CD8-positive, alpha-beta T cell (primary cell): ENCODE measurements at regions of chr2 and their contacts with region 1.

Region 1: DNA sequence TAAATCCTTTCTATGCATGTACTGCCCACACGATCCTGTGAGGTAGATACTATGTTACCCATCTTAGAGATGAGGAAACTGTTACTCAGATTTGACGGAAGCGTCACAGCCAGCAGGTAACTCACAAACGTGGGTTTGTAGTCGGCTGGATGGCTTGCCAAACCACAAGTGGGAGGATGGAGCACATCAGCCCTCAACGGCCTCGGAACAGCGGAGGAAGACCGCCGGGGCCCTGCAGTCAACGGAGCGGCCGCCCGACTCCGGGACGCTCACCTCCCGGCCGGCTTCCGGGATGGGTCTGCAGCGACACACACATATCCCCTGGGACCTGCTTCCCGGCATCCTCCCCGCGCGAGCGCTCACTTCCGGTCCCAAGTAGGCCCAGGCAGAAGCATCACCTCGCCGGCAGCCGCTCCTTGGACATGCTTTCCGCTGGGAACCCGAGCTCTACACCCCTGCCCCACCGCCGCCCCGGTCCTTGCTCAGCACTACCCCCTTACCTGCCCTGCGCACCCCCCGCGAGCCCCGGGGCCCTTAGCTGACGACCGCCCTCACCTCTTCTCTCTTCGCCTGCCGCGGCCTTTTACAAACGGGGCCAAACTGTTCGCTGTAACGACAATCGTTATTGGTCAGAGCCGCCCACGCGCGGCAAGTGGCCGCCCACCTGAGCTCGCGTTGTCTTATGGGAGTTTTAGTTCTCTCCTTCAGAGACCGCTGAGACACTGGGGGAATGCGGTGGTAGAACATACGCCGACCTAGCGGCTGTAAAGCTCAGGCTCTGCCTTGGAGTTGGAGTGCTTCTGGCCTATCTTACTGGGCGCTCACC is at the start of gene C2orf42:
- DNase-seq: peak; percentile 88 to 98 (median 95)
- ATAC-seq: peak; percentile 83
- H3K4me3 ChIP-seq: peak within 1 kb of the TSS; percentile 82 to 95
- H3K4me3 Mint-ChIP-seq: peak within 1 kb of the TSS; percentile 100
- H3K27ac ChIP-seq: peak within 1 kb of the TSS; percentile 88 to 99
- H3K27ac Mint-ChIP-seq: peak within 1 kb of the TSS; percentile 100
- H3K4me1 ChIP-seq: peaks cover 5% of the 10 kb centered on the region
- H3K4me1 Mint-ChIP-seq: peaks cover 24% of the 10 kb centered on the region
- H3K27me3 ChIP-seq: no peaks in the 10 kb centered on the region
- H3K27me3 Mint-ChIP-seq: peaks cover 2% of the 10 kb centered on the region
- CTCF ChIP-seq: no peak
- total RNA-seq, gene C2orf42: 14.7 to 16.8 TPM

Region 2: DNA sequence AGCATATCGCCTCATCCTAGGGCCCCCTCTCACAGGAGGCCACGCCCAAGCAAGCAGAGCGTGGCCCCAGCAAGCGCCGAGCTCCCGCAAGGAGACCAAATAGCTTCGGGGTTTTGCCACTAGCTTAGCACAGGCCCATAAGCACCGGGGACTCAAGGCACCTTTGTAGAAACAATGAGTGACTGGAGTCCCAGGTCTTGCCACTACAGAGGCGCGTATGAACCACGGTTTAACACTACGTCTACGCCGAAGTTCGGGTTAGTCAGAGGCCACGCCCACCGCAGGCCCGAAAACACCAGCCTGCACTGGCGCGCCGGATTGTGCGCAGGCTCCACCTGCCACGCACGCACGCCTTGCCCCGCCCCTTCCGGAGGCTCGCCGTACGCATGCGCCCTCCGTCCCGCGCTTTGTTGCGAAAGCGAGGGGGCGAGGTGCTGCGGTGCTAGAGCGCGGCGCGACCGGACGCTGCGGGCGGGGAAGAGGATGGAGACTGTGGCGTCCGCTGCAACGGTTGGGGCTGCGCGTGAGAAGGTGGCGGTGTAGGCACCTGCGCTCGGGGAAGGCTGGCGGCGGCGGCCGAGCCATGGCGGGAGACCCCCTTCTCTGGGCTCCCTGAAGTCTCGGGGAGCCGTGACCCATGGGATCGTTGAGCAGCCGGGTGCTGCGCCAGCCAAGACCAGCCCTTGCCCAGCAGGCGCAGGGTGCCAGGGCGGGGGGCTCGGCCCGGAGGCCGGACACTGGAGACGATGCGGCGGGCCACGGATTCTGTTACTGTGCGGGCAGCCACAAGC is 361.2 kb before region 1 on chr2 and contains the start of gene GMCL1:
- CTCF ChIA-PET with region 1: no interaction called
- POLR2A ChIA-PET with region 1: interaction called, 5 read pairs
- intact Hi-C with region 1: loop called (anchors 1 to 2 kb)
- DNase-seq: peak; percentile 96 to 100 (median 99)
- ATAC-seq: peak; percentile 94
- H3K4me3 ChIP-seq: peak within 1 kb of the TSS; percentile 70 to 75
- H3K4me3 Mint-ChIP-seq: peak within 1 kb of the TSS; percentile 96
- H3K27ac ChIP-seq: peak within 1 kb of the TSS; percentile 89 to 95
- H3K27ac Mint-ChIP-seq: peak within 1 kb of the TSS; percentile 96
- H3K4me1 ChIP-seq: peaks cover 36% of the 10 kb centered on the region
- H3K4me1 Mint-ChIP-seq: peaks cover 54% of the 10 kb centered on the region
- H3K27me3 ChIP-seq: no peaks in the 10 kb centered on the region
- H3K27me3 Mint-ChIP-seq: no peaks in the 10 kb centered on the region
- CTCF ChIP-seq: no peak
- total RNA-seq, gene GMCL1: 37.1 to 41.4 TPM

Region 3: DNA sequence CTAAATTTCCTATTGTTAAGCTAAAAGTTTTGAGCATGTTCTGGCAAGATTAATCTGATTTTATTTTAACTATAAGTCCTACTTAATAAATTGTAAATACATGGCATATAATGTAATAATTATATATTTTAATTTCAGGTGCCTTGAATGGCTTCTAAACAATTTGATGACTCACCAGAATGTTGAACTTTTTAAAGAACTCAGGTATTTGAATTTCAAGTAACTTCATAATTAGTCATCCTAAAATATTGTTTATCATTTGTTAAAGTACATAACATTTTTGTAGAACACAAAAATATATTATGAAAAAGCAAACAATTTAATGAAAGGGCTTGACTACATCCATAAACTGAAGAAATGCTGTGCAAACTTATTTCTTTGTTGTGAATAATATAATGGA is 346.6 kb before region 1 on chr2:
- CTCF ChIA-PET with region 1: no interaction called
- POLR2A ChIA-PET with region 1: no interaction called
- intact Hi-C with region 1: no loop called
- DNase-seq: no peak
- ATAC-seq: no peak
- H3K4me3 ChIP-seq: no peak overlapping the region
- H3K4me3 Mint-ChIP-seq: no peak overlapping the region
- H3K27ac ChIP-seq: no peak overlapping the region
- H3K27ac Mint-ChIP-seq: no peak overlapping the region
- H3K4me1 ChIP-seq: no peaks in the 10 kb centered on the region
- H3K4me1 Mint-ChIP-seq: no peaks in the 10 kb centered on the region
- H3K27me3 ChIP-seq: no peaks in the 10 kb centered on the region
- H3K27me3 Mint-ChIP-seq: no peaks in the 10 kb centered on the region
- CTCF ChIP-seq: no peak

Region 4: DNA sequence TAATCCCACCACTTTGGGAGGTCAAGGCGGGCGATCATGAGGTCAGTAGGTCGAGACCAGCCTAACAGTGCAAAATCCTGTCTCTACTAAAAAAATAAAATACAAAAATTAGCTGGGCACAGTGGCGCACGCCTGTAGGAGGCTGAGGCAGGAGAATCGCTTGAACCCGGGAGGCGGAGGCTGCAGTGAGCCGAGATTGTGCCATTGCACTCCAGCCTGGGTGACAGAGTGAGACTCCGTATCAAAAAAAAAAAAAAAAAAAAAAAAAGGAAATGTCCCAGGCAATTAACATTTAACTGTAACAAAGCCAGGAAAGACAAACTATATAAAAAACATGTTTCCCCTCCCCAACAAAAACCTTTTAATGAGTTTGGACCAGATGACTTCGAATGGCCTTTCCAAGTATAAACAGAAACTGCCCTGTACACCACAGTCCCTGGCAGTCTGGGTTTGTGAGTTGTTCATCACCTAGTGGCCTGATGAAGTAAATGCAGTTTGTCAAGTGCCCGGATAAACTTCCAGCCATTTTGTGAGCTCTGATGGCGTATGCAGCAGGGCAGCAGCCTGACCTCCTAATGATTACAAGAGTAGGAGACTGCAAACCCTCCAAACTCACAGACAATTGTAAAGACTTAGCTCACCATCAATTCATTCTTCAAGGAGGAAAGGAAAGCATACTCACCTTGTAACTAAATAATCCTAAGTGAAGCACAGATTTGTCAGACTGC is 119.9 kb before region 1 on chr2:
- CTCF ChIA-PET with region 1: interaction called, 5 read pairs
- POLR2A ChIA-PET with region 1: no interaction called
- intact Hi-C with region 1: loop called (anchors 2 to 5 kb)
- DNase-seq: peak; percentile 32 to 91 (median 59)
- ATAC-seq: peak; percentile 73
- H3K4me3 ChIP-seq: peak overlapping the region in 1 of 2 experiments; percentile 17
- H3K4me3 Mint-ChIP-seq: peak overlapping the region; percentile 74
- H3K27ac ChIP-seq: peak overlapping the region; percentile 12 to 87
- H3K27ac Mint-ChIP-seq: peak overlapping the region; percentile 97
- H3K4me1 ChIP-seq: peaks cover 42% of the 10 kb centered on the region
- H3K4me1 Mint-ChIP-seq: peaks cover 49% of the 10 kb centered on the region
- H3K27me3 ChIP-seq: no peaks in the 10 kb centered on the region
- H3K27me3 Mint-ChIP-seq: no peaks in the 10 kb centered on the region
- CTCF ChIP-seq: peak; percentile 87

Region 5: DNA sequence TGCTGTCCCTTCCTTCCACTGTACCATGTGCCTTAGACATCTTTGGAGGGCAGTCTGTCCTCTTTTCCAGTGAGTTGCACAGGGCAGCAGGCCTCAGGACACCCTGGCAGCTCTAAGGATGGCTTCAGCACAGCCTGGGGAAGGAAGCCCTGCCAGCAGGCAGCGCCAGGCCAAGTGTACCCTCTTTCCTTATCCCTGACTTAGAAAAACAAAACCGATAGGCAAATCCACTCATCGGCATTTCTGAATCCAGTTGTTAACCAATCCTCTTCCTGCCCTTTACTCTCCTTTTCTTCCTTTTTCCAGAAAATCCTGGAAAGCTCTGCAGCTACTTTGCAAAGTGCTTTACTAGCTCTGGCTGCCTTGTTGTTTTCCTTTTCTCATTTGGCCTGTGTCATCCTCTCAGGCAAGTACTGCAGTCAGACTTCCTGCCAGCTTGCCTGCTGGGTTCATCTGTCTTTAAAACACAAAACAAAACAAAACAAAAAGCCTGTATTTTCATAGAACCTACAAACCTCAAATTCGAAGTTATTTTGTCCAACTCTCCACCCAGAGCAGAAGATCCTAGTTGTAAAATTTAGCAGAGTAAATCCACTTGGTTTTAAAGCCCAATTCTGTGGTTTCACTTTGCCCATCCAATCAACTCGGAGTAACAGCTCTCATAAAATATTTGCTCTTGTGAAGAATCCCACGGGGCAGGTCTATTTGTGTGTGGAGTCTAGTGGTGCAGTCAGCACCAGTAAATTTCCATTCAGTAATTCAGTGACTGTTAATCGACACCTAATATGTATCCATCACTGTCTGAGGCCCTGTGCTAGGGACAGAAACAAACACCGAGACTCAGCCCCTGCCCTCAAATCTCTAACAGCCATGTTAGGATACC is 58.1 kb before region 1 on chr2:
- CTCF ChIA-PET with region 1: no interaction called
- POLR2A ChIA-PET with region 1: interaction called, 13 read pairs
- intact Hi-C with region 1: no loop called
- DNase-seq: peak in 6 of 9 experiments; percentile 48 to 78 (median 60)
- ATAC-seq: peak; percentile 53
- H3K4me3 ChIP-seq: peak overlapping the region; percentile 29 to 49
- H3K4me3 Mint-ChIP-seq: peak overlapping the region; percentile 91
- H3K27ac ChIP-seq: peak overlapping the region; percentile 62 to 90
- H3K27ac Mint-ChIP-seq: peak overlapping the region; percentile 98
- H3K4me1 ChIP-seq: peaks cover 74% of the 10 kb centered on the region
- H3K4me1 Mint-ChIP-seq: peaks cover 75% of the 10 kb centered on the region
- H3K27me3 ChIP-seq: no peaks in the 10 kb centered on the region
- H3K27me3 Mint-ChIP-seq: no peaks in the 10 kb centered on the region
- CTCF ChIP-seq: no peak

Region 6: DNA sequence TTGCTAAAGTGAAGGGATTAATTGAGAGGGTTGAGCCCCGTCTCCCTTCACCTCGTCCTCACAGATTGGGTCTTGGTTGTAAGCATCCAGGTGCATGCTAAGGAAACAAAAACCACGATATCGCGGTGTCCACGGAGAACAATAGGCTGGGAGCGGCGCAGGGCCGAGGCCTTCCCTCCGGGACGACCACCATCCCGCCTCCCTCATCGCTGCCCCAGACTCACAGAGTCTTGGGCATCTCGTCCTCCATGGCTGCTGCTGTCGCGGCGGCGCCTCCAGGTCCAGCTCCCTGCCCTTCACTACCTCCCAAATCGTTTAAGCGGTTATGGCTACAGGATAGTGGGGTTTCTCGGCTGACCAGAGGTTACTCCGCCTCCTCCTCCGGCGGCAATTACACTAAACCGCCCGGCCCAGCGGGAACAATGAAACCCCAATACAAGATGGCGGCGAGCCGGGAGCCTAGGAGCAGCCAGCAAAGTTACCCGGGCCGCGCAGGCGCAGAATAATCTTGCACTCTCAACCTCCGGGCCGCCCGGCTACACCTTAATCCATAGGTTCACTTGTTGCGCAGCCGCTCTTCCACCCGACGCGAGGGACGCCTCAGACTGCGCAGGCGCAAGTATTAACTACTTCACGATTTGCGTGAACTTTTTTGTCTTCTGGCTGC is 57.7 kb after region 1 on chr2 and contains the start of gene TIA1:
- CTCF ChIA-PET with region 1: no interaction called
- POLR2A ChIA-PET with region 1: interaction called, 4 read pairs
- intact Hi-C with region 1: loop called (anchors 1 kb)
- DNase-seq: peak; percentile 96 to 100 (median 98)
- ATAC-seq: peak; percentile 98
- H3K4me3 ChIP-seq: peak within 1 kb of the TSS; percentile 86 to 90
- H3K4me3 Mint-ChIP-seq: peak within 1 kb of the TSS; percentile 97
- H3K27ac ChIP-seq: peak within 1 kb of the TSS; percentile 86 to 92
- H3K27ac Mint-ChIP-seq: peak within 1 kb of the TSS; percentile 98
- H3K4me1 ChIP-seq: peaks cover 30% of the 10 kb centered on the region
- H3K4me1 Mint-ChIP-seq: peaks cover 37% of the 10 kb centered on the region
- H3K27me3 ChIP-seq: no peaks in the 10 kb centered on the region
- H3K27me3 Mint-ChIP-seq: no peaks in the 10 kb centered on the region
- CTCF ChIP-seq: no peak
- total RNA-seq, gene TIA1: 55.9 to 62.6 TPM

Region 7: DNA sequence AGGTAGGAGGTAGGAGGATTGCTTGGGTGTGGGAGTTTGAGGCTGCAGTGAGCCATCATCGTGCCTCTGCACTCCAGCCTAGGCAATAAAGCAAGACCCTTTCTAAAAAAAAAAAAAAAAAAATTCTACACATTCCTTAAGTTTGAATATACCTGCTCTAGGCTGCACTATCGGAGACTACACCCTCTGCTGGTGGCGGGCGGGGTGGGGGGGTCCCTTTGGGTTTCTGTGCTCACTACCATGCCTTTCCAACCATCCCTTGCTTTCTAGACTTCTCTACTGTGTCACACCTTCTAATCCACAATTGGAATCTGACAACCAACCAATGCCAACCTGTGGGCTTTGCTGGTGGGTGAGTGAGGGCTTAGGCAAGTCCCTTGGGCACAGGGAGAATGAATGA is 145.9 kb after region 1 on chr2:
- CTCF ChIA-PET with region 1: no interaction called
- POLR2A ChIA-PET with region 1: no interaction called
- intact Hi-C with region 1: no loop called
- DNase-seq: no peak
- ATAC-seq: no peak
- H3K4me3 ChIP-seq: no peak overlapping the region
- H3K4me3 Mint-ChIP-seq: no peak overlapping the region
- H3K27ac ChIP-seq: no peak overlapping the region
- H3K27ac Mint-ChIP-seq: no peak overlapping the region
- H3K4me1 ChIP-seq: no peaks in the 10 kb centered on the region
- H3K4me1 Mint-ChIP-seq: no peaks in the 10 kb centered on the region
- H3K27me3 ChIP-seq: no peaks in the 10 kb centered on the region
- H3K27me3 Mint-ChIP-seq: peaks cover 2% of the 10 kb centered on the region
- CTCF ChIP-seq: no peak